Dendritic cell treated with granulocyte-macrophage colony-stimulating factor and Interleukin-4, amounts not matched to agents 40 ng/mL and 50 ng/mL, for 4 days (primary cell): ENCODE measurements at regions of chr4 and their contacts with region 1.

Region 1: GRCh38 chr4:70901984-70902576 is at the start of gene MOB1B:
- H3K4me3 Mint-ChIP-seq: peak within 1 kb of the TSS; percentile 99
- H3K27ac Mint-ChIP-seq: peak within 1 kb of the TSS; percentile 89
- H3K4me1 Mint-ChIP-seq: peaks cover 47% of the 10 kb centered on the region
- H3K27me3 Mint-ChIP-seq: no peaks in the 10 kb centered on the region

Region 2: DNA sequence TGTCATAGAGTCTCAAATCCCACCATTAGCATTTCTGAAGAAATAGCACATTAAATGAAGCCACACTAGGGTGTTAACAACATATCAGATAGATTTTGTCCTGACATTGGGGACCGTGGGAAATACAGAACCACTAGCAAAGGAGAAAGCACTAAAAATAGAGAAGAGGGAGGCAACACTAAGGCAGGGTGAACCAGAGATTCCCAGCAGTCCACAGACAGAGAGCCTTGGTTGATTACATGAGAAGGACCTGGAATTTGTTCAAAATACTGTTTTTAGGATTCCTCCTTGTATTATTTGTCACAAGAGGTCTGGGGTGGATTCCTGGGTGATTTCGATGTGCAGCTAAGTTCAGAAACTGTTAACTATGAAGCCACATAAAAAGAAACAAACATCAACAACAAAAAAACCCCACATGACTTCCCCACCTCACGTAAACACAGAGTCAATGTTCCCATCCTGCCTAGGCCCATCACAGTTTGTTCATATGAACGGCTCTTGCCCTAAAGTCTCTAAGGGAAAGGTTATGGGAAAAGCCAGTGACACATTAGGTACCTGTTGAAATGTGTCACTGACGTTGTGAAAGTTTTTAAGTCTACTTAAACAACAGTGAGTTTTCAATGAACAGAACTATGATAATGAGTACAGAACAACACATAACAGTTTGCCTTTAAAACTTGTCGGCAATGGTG is 38.8 kb before region 1 on chr4:
- intact Hi-C with region 1: no loop called
- H3K4me3 Mint-ChIP-seq: no peak overlapping the region
- H3K27ac Mint-ChIP-seq: no peak overlapping the region
- H3K4me1 Mint-ChIP-seq: peaks cover 5% of the 10 kb centered on the region
- H3K27me3 Mint-ChIP-seq: no peaks in the 10 kb centered on the region

Region 3: DNA sequence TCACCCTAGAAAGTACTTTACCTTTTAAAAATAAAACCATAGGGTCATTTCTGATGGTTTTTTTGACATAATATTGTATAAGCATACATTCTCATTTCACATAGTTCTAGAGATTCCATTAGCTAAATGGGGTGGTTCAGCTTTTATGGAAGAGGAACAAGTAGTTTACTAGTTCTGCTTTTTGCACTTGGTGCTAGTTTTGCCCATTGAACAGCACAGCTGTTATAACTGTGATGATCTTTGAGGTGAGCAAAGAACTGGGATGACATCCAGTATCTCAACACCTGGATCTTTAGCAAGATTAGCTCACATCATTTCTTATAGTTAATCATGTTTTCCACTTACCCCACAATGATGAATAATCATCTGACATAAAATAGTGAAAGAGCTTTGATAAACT is 41.0 kb after region 1 on chr4:
- intact Hi-C with region 1: loop called (anchors 5 kb)
- H3K4me3 Mint-ChIP-seq: no peak overlapping the region
- H3K27ac Mint-ChIP-seq: peak overlapping the region; percentile 80
- H3K4me1 Mint-ChIP-seq: peaks cover 50% of the 10 kb centered on the region
- H3K27me3 Mint-ChIP-seq: no peaks in the 10 kb centered on the region

Region 4: GRCh38 chr4:70993181-70994068 is 91.3 kb after region 1 on chr4 and contains the start of gene DCK:
- intact Hi-C with region 1: loop called (anchors 5 kb)
- H3K4me3 Mint-ChIP-seq: peak within 1 kb of the TSS; percentile 97
- H3K27ac Mint-ChIP-seq: peak within 1 kb of the TSS; percentile 90
- H3K4me1 Mint-ChIP-seq: peaks cover 34% of the 10 kb centered on the region
- H3K27me3 Mint-ChIP-seq: no peaks in the 10 kb centered on the region

Region 5: GRCh38 chr4:71009890-71010588 is 108.0 kb after region 1 on chr4:
- intact Hi-C with region 1: loop called (anchors 2 kb)
- H3K4me3 Mint-ChIP-seq: no peak overlapping the region
- H3K27ac Mint-ChIP-seq: no peak overlapping the region
- H3K4me1 Mint-ChIP-seq: peaks cover 43% of the 10 kb centered on the region
- H3K27me3 Mint-ChIP-seq: no peaks in the 10 kb centered on the region

Region 6: DNA sequence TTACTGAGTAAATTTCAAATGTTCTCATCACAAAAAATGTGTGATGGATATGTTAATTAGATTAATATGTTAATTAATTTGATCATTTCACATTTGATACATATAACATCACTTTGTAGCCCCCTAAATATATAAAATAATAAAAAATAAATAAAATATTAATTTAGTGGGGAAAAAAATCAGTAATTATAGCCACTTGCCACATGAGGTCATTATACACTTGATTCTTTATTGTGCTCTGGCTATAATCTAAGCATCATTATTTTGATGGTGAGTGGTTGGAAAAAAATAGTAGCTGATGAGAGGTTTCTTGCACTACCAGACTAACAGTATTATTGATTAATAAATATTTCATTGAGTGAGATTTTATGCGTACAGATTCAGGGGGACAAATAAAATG is 148.7 kb after region 1 on chr4:
- intact Hi-C with region 1: no loop called
- H3K4me3 Mint-ChIP-seq: no peak overlapping the region
- H3K27ac Mint-ChIP-seq: no peak overlapping the region
- H3K4me1 Mint-ChIP-seq: no peaks in the 10 kb centered on the region
- H3K27me3 Mint-ChIP-seq: no peaks in the 10 kb centered on the region